ENCODE measurements at regions of chr12 and their contacts with region 1.

Region 1: GRCh38 chr12:121626087-121626852 is at the start of gene ORAI1:
- DNase-seq: peak; percentile 87
- H3K4me3 ChIP-seq: peak within 1 kb of the TSS; percentile 51 to 70 (median 58)
- H3K27ac ChIP-seq: peak within 1 kb of the TSS; percentile 66
- H3K4me1 ChIP-seq: peaks cover 21% of the 10 kb centered on the region
- H3K27me3 ChIP-seq: no peaks in the 10 kb centered on the region
- CTCF ChIP-seq: no peak
- total RNA-seq, gene ORAI1: 3.3 to 23.1 TPM

Region 2: DNA sequence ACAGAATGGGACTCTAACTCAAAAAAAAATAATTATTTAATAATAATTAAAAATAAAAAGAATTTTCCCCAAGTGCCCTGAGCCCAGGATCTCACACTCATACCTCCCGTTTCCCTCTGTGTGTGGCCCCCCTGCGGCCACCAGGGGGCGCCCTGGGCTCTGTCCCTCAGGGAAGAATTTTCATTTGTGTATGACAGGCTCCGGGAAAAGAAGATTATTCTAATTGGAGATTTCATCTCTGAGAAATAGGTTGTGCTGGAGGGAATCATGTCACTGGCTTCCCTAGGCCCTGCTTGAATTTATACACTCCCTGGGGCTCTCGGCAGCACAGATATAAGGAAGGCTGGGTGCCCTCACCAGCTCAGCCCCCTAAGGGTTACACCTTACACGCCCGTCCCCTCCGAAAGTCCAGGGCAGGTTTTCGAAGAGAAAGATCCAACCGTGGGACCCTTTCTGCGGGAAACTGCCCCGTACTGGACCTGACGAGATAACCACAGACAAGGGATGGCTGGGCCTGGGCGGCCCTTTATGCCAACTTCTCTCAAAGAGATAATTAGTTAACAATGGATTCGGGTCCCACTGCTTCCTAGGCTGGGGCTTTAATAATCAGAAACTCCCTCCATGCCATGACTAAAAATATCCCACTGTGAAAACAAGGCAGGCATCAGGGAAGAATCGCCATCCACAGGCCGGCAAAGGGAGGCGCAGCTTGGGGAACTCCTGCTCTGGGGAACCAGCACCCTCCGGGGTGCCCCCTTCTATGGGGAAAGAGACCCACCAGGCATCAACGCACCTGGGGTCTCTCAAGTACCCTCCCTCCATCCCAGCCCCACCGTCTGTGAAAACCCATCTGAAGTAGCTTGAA is 126.1 kb before region 1 on chr12:
- CTCF ChIA-PET with region 1: no interaction called
- dilution Hi-C with region 1: no loop called
- in situ Hi-C with region 1: no loop called
- intact Hi-C with region 1: loop called (anchors 2 kb)
- DNase-seq: peak; percentile 43
- H3K4me3 ChIP-seq: no peak overlapping the region
- H3K27ac ChIP-seq: no peak overlapping the region
- H3K4me1 ChIP-seq: no peaks in the 10 kb centered on the region
- H3K27me3 ChIP-seq: no peaks in the 10 kb centered on the region
- CTCF ChIP-seq: peak; percentile 94 to 97

Region 3: GRCh38 chr12:121579981-121580868 is 46.0 kb before region 1 on chr12:
- CTCF ChIA-PET with region 1: interaction called, 5 read pairs
- dilution Hi-C with region 1: no loop called
- in situ Hi-C with region 1: no loop called
- intact Hi-C with region 1: loop called (anchors 1 kb)
- DNase-seq: peak; percentile 33
- H3K4me3 ChIP-seq: peak overlapping the region; percentile 59 to 84 (median 61)
- H3K27ac ChIP-seq: peak overlapping the region; percentile 20
- H3K4me1 ChIP-seq: peaks cover 21% of the 10 kb centered on the region
- H3K27me3 ChIP-seq: no peaks in the 10 kb centered on the region
- CTCF ChIP-seq: no peak

Region 4: GRCh38 chr12:121668750-121669520 is 42.7 kb after region 1 on chr12:
- CTCF ChIA-PET with region 1: no interaction called
- dilution Hi-C with region 1: no loop called
- in situ Hi-C with region 1: no loop called
- intact Hi-C with region 1: loop called (anchors 2 kb)
- DNase-seq: no peak
- H3K4me3 ChIP-seq: no peak overlapping the region
- H3K27ac ChIP-seq: no peak overlapping the region
- H3K4me1 ChIP-seq: peaks cover 14% of the 10 kb centered on the region
- H3K27me3 ChIP-seq: no peaks in the 10 kb centered on the region
- CTCF ChIP-seq: peak; percentile 42 to 51

Region 5: GRCh38 chr12:121693155-121693687 is 67.0 kb after region 1 on chr12:
- CTCF ChIA-PET with region 1: no interaction called
- dilution Hi-C with region 1: no loop called
- in situ Hi-C with region 1: no loop called
- intact Hi-C with region 1: no loop called
- DNase-seq: no peak
- H3K4me3 ChIP-seq: no peak overlapping the region
- H3K27ac ChIP-seq: no peak overlapping the region
- H3K4me1 ChIP-seq: no peaks in the 10 kb centered on the region
- H3K27me3 ChIP-seq: no peaks in the 10 kb centered on the region
- CTCF ChIP-seq: no peak

Region 6: GRCh38 chr12:121712461-121713256 is 86.4 kb after region 1 on chr12 and contains the start of gene TMEM120B:
- CTCF ChIA-PET with region 1: no interaction called
- dilution Hi-C with region 1: no loop called
- in situ Hi-C with region 1: no loop called
- intact Hi-C with region 1: no loop called
- DNase-seq: peak; percentile 58
- H3K4me3 ChIP-seq: peak within 1 kb of the TSS; percentile 88 to 98 (median 92)
- H3K27ac ChIP-seq: peak within 1 kb of the TSS; percentile 87
- H3K4me1 ChIP-seq: peaks cover 10% of the 10 kb centered on the region
- H3K27me3 ChIP-seq: no peaks in the 10 kb centered on the region
- CTCF ChIP-seq: no peak
- total RNA-seq, gene TMEM120B: 15.8 to 19.5 TPM

Region 7: GRCh38 chr12:121773011-121773777 is 146.9 kb after region 1 on chr12:
- CTCF ChIA-PET with region 1: no interaction called
- dilution Hi-C with region 1: loop called (anchors 25 kb)
- in situ Hi-C with region 1: no loop called
- intact Hi-C with region 1: no loop called
- DNase-seq: peak; percentile 64
- H3K4me3 ChIP-seq: no peak overlapping the region
- H3K27ac ChIP-seq: no peak overlapping the region
- H3K4me1 ChIP-seq: peaks cover 10% of the 10 kb centered on the region
- H3K27me3 ChIP-seq: no peaks in the 10 kb centered on the region
- CTCF ChIP-seq: peak; percentile 77 to 95